ENCODE measurements at regions of chr12 and their contacts with region 1.

Region 1: DNA sequence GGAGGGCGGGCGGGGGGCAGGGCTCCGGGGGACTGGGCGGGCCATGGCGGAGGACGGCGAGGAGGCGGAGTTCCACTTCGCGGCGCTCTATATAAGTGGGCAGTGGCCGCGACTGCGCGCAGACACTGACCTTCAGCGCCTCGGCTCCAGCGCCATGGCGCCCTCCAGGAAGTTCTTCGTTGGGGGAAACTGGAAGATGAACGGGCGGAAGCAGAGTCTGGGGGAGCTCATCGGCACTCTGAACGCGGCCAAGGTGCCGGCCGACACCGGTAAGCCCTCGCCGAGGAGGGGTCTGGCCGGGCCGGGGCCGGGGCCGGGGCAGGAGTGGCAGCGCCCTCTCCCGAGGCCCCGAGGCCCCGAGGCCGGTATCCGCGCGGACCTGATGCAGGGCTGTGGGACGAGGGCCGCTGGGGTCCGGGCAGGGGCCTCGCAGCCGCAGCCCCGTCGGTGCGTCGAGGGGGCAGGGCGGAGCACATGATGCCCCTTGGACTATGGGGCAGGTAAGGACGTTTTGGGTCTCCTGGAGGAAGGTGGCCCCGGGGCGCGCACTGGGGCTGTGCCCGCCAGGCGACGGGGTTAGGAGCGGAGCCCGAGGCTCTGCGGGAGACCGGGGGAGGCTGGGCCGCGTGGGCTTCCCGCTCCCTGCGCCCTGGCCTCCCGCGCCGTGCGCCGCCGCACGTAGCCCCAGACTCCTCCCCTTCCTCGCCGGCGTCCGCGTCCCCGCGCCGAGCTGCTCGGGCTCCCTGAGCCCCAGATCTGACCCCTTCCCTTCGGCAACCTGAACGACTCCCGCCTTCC is at the start of gene TPI1:
- DNase-seq: peak; percentile 95
- total RNA-seq, gene TPI1: 303 to 366 TPM

Region 2: DNA sequence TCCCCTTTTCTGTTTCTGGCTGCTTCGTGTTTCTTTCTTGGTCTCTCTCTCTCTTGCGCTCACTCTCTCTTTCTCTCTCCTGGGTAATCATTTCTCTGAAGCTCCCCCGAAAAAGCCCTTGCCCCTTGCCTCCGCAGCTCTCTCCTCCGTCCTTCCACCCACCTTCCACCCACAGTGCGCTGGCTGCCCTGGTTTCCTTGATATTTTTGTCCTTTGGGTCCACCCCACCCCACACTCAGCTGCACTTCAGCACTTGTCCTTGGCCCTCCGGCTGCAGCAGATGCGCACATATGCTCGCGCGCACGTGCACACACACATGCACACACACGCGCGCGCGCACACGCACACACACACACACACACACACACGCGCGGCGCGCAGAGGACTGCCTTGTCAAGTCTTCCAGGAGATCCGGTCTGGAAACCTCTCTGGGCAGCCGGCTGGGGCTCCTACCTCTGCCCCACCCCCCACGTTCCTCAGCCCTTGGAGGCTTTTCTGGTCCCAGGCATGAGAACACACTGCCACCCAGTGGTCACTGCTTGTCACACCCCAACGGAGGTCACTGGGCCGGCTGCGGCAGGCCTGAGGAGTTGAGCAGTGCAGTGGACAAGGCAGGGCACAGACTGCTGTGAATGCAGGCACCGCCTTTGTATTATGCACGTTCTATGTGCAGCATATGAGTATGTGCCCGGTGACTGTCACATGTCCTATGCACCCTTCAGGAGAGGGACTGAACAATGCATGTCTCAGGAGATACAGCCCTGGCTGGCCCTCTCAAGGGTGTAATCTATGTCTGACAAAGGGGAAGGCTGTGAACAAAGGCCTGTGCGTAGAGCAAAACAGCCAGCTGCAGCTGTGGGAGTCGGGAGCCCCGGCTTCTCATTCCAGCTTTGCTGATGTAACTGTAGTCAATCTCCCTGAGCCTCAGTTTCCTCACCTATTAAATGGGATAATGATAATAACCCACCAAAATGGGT is 88.8 kb before region 1 on chr12:
- intact Hi-C with region 1: no loop called
- DNase-seq: peak; percentile 98

Region 3: GRCh38 chr12:6927379-6928024 is 59.9 kb after region 1 on chr12 and contains the start of gene ATN1:
- intact Hi-C with region 1: loop called in 1 of 2 experiments (anchors 5 kb)
- DNase-seq: peak; percentile 94
- total RNA-seq, gene ATN1: 97.0 to 106 TPM

Region 4: DNA sequence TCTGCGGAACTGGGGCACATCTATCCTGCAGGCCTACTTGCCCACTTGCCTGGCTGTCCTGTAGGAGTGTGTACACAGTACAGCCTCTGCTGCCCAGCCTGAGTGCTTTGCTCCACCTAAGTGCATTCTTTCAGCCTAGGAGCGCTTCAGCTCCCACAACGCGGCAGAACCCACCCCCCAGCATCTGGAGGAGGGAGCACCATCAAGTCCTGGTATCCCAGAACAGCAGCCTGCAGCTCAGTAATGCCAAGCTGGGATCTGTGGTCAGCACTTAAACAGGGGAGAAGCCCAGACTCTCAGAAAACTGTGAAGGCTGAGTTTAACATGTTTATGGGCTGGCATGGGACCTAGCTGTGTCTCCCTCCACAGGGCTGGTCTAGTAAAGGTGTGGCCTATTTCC is 716.0 kb after region 1 on chr12:
- intact Hi-C with region 1: no loop called
- DNase-seq: no peak

Measured in posterior vena cava (tissue), 2 donors.